ENCODE measurements at regions of chr12 and their contacts with region 1.

Region 1: DNA sequence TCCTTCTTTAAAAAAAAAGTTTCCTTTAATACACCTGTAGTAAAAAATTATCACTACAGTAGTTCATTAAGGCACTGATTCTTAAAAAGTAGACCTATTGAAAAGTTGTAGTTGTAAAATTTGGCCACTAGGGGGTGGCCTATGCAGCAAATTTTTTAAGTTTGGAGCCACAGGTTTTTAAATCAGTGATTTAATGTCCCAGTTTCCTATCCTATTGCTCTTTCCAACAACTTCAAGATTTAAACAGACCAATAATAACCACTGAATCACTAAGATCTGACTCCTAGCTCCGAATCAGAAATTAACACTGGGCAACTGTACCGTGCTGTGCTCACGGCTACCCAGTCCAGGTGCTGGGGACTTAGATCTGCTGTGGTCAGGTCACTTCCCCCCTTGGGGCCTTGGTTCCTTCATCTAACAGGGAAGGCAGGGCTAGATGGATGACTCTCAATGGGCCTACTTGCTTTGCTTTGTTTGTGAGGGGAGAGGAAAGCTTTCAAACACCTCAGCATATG is 279.3 kb downstream of the MED13L start:
- DNase-seq: peak; percentile 21
- H3K4me3 ChIP-seq: no peak overlapping the region
- CTCF ChIP-seq: peak; percentile 33

Region 2: DNA sequence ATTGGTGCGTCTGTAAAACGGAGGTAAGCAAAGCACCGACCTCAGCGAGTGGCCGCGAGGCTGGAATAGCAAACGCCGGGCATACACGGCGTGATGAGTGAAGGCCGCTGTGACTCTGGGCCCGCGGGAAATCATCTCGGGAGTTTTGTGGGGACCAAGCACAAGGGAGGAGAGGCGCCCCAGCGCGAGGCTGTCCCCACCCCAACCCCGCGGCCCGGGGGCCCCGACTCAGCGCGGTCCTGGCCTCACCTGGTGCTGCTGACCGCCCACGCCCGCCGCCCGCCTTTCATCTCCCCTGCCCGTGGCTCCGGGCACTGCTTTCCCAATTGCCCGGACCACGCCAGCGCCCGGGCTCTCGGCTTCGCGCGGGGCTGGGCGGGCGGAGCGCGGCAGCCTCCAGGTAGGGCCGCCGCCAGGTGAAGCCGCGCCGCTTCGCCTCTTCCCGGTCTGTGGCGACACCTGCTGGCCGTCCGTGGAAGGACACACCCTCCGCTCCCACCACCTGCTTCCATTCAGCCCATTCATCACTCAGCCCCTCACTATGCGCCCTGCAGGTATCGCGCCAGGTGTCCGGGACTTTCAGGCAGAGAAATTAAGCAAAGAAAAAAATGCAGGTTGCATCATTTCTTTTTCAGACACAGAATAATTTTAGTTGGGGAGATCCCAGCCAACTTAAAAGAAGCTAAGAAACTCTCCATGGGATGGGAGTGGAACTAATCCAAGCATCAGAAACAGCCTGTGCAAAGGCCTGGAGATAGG is 81.1 kb before region 1 on chr12:
- CTCF ChIA-PET with region 1: no interaction called
- POLR2A ChIA-PET with region 1: no interaction called
- DNase-seq: no peak
- H3K4me3 ChIP-seq: no peak overlapping the region
- CTCF ChIP-seq: peak; percentile 92

Region 3: DNA sequence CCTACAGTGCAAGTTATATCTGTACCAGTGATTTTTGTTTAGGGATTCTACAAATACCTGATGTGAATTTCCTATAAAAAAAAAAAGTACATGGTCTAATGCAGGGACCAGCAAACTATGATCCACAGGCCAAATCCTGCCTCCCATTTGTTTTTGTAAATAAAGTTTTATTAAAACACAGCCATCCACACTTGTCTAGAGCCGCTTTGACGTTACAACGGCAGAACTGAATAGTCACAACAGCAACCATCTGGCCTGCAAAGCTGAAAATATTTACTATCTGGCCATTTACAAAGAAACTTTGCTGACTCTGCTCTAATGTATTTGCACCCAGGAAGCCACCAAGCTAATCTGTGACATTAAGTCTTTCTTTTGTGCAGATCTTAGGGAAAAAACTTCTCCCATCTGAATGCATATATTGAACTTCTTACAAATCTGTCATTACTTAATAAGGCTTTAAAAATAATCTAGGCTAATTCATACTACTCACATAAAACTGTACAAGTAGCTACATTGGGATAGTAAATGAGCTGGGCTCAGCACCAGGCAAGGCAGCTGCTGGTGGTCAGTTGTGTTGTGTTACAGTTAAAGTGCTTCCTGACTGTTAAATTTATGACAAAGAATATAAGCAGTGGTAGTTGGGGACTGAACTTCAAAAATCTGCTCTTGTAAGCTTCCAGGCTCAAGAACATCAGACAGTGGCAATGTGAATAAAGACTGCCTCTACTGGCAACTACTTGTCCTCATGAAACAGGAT is 24.0 kb before region 1 on chr12:
- CTCF ChIA-PET with region 1: interaction called, 23 read pairs
- POLR2A ChIA-PET with region 1: no interaction called
- DNase-seq: no peak
- H3K4me3 ChIP-seq: no peak overlapping the region
- CTCF ChIP-seq: no peak

Region 4: DNA sequence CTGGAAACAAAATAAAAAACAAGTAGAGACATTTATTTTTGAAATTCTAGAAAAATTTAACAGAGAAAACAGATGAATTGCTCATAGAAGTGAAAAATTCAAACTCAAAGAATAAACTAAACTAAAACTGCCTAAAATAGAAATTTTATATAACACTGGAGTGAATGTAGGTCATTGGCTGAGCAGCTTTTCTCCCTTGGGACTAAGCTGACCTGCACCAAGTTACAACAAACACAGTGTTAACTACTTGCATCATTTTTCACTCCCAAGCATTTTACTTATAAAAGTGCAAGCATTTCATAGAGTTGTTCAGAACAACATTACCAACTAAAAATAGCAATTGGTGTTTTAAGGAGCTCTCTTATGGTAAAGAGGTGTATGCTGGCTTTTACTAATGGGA is 18.8 kb before region 1 on chr12:
- CTCF ChIA-PET with region 1: interaction called, 23 read pairs
- POLR2A ChIA-PET with region 1: no interaction called
- DNase-seq: no peak
- H3K4me3 ChIP-seq: no peak overlapping the region
- CTCF ChIP-seq: no peak

Region 5: DNA sequence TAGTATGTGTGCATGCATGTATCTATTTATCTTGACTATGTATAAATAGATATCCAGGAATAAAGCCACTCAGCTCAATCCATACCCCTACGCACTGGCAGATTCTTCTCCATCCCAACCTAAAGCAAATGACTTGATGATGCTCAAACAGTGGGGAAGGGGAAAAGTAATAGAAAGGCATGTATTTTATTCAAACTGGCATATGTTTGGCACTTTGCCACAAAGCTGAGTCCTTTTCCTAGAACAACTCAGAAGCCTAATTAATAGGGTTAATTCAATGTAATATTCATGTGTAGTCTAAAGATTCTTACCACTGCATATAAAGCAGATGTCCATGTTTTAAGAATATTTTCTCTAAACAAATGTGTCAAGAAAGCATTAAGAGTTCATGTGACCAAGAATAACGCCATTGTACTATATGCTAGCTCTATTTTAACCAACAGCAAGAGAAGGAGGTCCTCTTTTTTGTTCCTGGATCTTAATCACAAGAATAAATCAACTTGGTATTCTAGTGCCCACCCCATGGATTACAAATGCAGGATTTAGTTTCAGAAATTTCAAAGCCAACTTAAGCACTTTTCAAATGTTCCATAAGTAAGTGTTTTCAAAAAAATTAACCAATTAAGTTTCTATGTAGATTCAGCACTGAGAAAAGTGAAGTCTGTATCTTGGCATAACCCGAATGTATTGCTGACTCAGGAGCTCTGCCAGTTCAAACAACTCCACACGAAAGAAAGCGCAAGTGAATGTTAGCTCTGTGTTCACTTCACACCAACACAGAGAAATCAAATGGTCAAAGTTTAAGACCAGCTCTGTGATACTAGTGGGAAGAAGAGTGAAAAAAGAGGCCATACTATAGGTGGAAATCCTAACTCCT is 45.7 kb after region 1 on chr12:
- CTCF ChIA-PET with region 1: interaction called, 13 read pairs
- POLR2A ChIA-PET with region 1: no interaction called
- DNase-seq: no peak
- H3K4me3 ChIP-seq: no peak overlapping the region
- CTCF ChIP-seq: no peak

Region 6: GRCh38 chr12:116276652-116277221 is 278.6 kb after region 1 on chr12:
- CTCF ChIA-PET with region 1: interaction called, 10 read pairs
- POLR2A ChIA-PET with region 1: no interaction called
- DNase-seq: no peak
- H3K4me3 ChIP-seq: peak overlapping the region; percentile 86
- CTCF ChIP-seq: no peak

Region 7: DNA sequence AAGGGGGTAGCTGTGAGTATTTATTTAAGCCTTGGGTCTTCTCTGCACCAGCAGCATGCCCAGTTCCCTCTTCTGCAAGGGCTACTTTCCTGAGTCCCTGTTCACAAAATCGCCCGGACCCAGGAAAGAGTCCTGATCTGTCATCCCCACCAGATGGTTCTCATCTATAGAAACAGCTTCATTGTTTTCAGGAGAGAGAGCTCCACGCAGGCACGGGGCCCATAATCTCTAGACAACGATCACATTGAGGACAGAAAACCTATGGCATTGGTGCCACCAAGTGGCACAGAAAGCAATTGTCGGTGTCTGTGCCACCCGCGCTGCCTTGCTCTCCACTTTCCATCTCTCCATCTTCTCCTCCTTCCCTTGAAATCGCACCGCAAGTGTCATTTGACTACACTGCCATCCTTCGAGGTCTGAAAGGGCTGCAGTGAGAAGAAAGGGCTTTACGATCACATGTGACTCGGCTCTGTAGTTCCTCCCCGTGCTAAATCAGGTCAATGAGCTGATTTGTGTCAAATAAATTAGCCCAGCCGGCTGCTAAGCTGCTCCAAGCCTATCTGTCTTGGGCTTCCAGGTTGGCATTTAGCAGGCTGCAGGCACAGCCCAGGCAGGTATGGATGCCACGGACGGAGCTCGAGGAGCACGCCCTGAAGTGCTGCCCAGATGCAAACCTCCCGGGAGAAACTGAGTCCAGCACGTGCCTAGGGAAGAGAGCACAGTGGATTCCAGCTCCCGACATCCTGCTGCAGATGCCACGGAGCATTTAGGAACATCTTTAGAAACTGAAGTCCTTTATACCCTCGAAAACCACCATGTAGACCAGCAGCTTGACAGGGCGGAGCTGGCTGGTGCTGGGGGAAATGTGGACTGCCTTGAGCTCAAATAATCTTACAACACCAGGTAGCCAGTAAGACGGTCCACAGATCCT is 710.9 kb after region 1 on chr12:
- CTCF ChIA-PET with region 1: interaction called, 17 read pairs
- POLR2A ChIA-PET with region 1: no interaction called
- DNase-seq: no peak
- H3K4me3 ChIP-seq: peak overlapping the region; percentile 31
- CTCF ChIP-seq: peak; percentile 70